Posterior cingulate gyrus (tissue), 11 donors: ENCODE measurements at regions of chr9 and their contacts with region 1.

Region 1: DNA sequence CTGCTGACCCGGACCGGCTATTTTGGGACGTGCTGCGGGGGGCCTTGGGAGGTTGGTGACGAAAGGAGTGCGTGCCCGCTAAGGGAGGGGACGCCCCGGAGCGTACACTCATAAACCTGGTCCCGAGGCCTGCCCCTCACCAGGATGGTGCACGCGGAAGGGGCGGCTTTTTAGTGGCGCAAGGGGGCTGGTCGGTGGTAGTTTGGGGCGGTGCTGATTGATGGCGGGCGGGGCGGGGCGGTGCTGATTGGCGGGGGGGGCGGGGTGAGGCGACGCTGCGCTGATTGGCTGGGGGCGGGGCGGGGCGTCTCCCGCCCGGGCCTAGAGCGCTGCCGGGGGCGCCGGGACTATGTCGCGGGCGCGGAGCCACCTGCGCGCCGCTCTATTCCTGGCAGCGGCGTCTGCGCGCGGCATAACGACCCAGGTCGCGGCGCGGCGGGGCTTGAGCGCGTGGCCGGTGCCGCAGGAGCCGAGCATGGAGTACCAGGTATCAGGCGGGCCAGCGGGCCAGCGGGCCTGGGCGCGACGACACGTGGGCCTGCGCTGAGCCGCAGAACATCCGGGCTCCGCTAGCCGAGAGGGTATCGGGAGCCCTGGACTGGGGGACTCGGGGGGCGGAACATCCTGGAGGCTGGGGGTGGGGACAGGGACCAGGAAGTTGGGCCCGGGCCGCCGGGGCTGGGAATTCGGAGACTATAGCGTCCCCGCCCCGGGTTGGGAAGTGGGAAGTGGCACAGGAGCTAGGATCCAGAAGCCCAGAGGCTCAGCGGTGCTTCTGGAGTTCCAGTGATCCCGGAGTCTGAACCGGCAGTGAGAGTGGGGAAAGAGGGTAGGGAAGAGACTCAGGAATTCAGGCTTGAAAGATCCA is at the start of gene FPGS:
- DNase-seq: peak; percentile 77 to 97 (median 84)

Region 2: DNA sequence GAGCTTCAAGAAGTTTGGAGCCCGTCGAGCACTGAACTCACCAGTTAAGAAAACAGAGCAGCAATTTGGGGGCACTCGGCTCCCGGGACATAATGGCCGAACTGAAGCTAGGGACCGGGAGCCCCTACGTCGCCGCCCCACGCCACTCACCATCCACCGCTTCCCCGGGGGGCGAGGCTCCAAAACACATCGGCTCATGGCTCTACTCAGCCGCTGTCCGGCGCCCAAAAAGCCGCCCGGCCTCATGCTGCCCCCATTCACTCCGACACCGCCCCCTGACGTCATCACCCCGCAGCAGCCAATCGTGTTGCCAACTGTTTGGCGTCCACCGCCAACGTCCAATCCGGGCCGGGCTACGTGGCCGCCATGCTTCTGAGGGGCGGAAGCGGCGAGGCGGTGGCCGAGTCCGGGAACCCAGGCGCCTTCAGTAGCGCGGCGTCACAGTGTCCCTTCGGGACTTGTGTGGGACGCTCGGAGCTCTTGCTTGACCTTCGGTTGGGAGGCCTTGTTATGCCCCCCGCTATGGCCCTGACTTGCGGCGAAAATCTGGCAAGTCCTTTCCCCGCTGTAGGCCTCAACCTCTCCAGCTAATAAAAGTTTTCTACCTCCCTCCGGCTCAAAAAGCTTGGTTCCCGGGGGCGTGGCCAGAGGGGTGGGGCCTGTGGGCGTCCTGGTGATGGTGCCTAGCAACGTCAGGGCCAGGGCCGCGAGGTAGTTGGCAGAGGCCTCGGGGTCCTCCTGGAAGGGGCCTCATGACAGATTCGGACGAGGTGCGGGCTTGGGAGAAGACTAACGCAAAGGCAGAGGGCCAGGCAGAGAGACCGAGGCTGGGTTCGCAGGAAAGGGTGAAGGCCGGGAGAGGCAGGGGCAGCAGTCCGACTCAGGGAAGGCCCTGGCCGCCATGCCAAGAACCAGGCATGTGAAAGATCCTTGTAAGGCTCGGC is 87.1 kb before region 1 on chr9 and contains the starts of genes PTRH1 and TTC16:
- intact Hi-C with region 1: no loop called
- DNase-seq: peak; percentile 97 to 100 (median 99)

Region 3: DNA sequence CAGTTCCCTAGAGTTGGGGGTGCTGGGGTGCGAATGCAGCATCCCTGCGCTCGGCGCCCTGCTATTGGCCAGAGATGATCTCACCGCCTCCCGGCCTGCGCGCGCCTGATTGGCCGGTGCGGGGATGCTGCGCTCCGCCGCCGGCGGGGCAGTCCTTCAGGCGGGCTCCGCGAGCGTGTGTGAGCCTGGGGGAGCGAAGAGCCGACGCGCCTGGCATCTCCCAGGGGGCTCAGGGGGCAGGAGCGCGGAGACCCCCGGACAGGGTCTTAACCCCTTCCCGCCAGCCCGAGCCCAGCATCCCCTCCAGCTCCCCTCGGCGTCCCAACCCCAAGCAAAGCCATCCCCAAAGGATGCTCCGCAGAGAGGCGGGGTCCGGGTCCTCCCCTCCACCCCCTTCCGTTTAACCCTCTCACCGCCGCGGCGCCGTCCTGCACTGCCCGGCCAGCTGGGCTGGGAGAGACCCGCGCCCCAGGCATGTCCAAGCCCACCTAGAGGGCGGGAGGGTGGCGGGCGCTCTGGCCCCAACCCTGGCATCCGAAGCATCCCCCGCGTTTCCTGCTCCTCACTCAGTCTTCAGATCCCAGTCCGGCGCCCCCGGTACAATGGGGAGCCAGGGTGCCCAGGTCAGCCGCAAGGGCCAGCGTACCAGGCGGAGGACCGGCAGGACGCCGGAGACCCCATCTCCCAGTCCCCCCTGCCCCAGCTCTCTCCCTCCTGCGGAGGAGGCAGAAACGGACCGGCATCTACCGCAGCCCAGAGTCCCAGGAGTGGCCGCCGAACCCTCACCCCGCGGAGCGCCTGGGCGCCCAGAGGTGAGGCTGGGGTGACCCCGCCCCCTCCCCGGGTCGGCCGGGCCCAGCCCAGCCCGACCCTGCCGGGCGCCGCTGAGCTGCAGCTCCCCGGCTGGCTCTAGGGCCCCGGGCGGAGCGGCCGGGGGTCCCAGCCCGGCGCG is 48.4 kb before region 1 on chr9:
- intact Hi-C with region 1: no loop called
- DNase-seq: peak; percentile 56 to 98 (median 81)

Region 4: GRCh38 chr9:127785023-127785932 is 17.5 kb before region 1 on chr9:
- intact Hi-C with region 1: loop called (anchors 2 kb)
- DNase-seq: peak; percentile 77 to 97 (median 86)

Region 5: GRCh38 chr9:127854184-127854806 is 51.5 kb after region 1 on chr9 and contains the start of gene ENG:
- intact Hi-C with region 1: no loop called
- DNase-seq: no peak

Region 6: GRCh38 chr9:127869310-127870152 is 66.7 kb after region 1 on chr9:
- intact Hi-C with region 1: loop called (anchors 10 kb)
- DNase-seq: peak; percentile 69 to 97 (median 86)

Region 7: DNA sequence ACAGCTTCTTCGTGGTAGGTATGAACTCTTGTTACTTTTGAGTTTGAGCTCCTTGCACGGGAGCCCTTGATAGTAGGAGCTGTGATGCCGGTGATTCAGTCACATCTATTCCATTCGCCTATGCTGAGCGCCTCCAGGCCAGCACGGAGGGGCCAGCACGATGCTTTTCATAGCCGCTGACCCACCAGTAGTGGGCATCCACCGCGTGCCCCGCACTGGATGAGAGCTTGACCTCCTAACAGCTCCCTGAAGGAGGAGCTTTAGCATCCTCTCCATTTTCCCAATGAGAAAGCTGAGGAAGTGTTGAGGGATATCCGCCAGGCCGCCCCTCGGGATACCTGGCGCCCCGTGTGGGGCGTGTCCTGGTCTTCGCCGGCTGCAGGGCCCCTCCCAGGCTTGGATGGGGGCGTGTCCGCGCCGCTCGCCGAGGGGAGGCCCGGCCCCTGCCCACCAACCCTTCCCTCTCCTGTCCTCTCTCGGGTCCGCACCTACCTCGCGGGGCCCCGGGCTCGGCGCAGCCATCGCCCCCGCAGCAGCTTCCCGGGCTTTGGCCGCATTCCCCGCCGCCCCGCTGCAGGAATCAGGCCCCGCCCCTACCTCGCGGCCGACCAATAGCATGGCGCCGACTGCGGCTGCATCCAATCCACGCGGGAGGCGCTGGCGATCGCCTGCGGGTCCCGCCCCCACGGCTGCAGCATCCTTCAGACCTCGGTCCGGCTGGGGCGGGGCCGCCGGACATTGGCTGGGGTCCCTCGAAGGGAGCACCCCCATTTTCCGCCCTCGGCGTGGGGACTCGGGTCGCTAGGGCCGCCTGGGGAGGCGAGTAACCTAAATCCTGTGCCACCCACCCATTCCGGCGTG is 127.7 kb after region 1 on chr9 and contains the start of gene PIP5KL1:
- intact Hi-C with region 1: no loop called
- DNase-seq: peak; percentile 82 to 99 (median 90)